Aorta (tissue), 5 donors: ENCODE measurements at regions of chr1 and their contacts with region 1.

Region 1: GRCh38 chr1:20151906-20152598 is 12.9 kb downstream of the PLA2G2F start:
- DNase-seq: peak; percentile 91 to 94
- ATAC-seq: peak; percentile 93
- H3K4me3 ChIP-seq: no peak overlapping the region
- H3K27ac ChIP-seq: no peak overlapping the region
- H3K4me1 ChIP-seq: no peaks in the 10 kb centered on the region
- H3K27me3 ChIP-seq: no peaks in the 10 kb centered on the region

Region 2: DNA sequence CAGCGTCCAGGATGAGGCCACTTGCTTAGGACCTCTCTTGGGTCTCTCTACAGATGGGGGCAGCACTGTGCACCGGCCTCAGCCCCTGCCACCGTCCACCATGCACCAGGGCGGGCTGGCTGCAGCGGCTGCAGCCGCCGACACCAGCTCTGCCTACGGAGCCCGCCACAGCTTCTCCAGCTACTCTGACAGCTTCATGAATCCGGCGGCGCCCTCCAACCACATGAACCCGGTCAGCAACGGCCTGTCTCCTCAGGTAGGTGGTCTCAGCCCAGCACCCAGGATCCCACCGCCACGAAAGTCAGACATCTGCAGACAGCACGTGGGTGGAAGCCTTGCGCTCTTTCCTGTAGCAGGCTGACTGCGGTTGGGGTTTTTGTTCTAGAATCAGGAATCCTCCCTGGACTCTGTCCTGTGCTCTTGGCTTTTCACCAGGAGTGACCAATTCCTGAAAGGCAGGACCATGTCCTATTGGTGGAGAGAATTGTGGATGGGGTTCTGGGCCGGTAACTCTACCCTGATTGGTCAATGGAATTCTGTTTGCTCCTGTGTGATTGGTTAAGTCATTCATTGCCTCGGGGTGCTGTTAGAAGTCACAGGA is 1448.9 kb before region 1 on chr1:
- intact Hi-C with region 1: no loop called
- DNase-seq: no peak
- ATAC-seq: no peak
- H3K4me3 ChIP-seq: no peak overlapping the region
- H3K27ac ChIP-seq: no peak overlapping the region
- H3K4me1 ChIP-seq: no peaks in the 10 kb centered on the region
- H3K27me3 ChIP-seq: no peaks in the 10 kb centered on the region

Region 3: DNA sequence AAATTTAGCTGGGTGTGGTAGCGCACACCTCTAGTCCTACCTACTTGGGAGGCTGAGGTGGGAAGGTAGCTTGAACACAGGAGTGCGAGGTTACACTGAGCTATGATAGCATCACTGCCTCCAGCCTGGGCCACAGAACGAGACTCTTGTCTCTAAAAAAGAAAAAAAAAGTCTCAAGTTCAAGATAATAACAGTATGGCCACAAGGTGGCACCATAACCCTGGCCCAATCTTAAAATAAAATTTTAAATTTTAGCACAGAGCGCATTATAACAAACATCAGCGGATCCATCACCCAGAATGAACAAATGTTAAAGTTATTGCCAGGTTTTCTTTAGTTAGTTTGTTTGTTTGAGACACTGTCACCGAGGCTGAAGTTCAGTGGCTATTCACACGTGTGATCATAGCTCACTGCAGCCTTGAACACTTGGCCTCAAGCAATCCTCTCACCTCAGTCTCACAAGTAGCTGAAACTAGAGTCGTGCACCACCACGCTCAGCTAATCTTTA is 490.3 kb before region 1 on chr1:
- intact Hi-C with region 1: loop called (anchors 10 kb)
- DNase-seq: no peak
- ATAC-seq: no peak
- H3K4me3 ChIP-seq: no peak overlapping the region
- H3K27ac ChIP-seq: no peak overlapping the region
- H3K4me1 ChIP-seq: no peaks in the 10 kb centered on the region
- H3K27me3 ChIP-seq: no peaks in the 10 kb centered on the region

Region 4: DNA sequence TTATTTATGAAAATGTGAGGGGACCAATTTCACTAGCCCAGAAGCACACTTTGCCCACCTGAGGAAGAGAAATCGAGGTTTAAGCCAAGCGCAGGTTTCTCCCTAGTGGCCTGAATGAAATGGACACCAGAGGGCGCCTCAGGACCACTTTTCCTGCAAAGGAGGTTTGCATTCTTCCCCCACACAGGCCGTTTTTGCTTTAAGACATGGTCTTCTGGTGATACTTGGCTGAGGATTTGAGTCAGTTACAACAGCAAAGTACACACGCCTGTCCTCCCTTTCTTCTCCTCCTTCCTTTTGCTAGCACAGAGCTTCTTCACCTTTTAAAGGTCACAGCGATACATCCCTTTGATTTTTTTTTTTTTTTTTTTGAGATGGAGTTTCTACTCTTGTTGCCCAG is 234.0 kb before region 1 on chr1:
- intact Hi-C with region 1: loop called (anchors 1 to 2 kb)
- DNase-seq: peak; percentile 82 to 91
- ATAC-seq: peak; percentile 78
- H3K4me3 ChIP-seq: no peak overlapping the region
- H3K27ac ChIP-seq: no peak overlapping the region
- H3K4me1 ChIP-seq: no peaks in the 10 kb centered on the region
- H3K27me3 ChIP-seq: no peaks in the 10 kb centered on the region

Region 5: GRCh38 chr1:19974822-19975416 is 177.1 kb before region 1 on chr1:
- intact Hi-C with region 1: loop called in 1 of 2 experiments (anchors 2 kb)
- DNase-seq: no peak
- ATAC-seq: peak; percentile 69
- H3K4me3 ChIP-seq: no peak overlapping the region
- H3K27ac ChIP-seq: no peak overlapping the region
- H3K4me1 ChIP-seq: no peaks in the 10 kb centered on the region
- H3K27me3 ChIP-seq: no peaks in the 10 kb centered on the region